SK-N-SH (cell line): ENCODE measurements at regions of chr22 and their contacts with region 1.

Region 1: GRCh38 chr22:35638410-35638809 is 9.8 kb upstream of the APOL6 start:
- DNase-seq: peak; percentile 89
- H3K4me3 ChIP-seq: no peak overlapping the region
- H3K27ac ChIP-seq: peak overlapping the region; percentile 70 to 95
- H3K4me1 ChIP-seq: peaks cover 7 to 29% of the 10 kb centered on the region in 2 experiments; a peak in 2 of 4 replicates
- H3K27me3 ChIP-seq: no peaks in the 10 kb centered on the region
- CTCF ChIP-seq: no peak
- EP300 ChIP-seq: peak in 1 of 2 experiments; percentile 85; a peak in 2 of 4 replicates
- RAD21 ChIP-seq: 0 out of 2 replicates have a peak, but pooled peaks have one; percentile 21

Region 2: DNA sequence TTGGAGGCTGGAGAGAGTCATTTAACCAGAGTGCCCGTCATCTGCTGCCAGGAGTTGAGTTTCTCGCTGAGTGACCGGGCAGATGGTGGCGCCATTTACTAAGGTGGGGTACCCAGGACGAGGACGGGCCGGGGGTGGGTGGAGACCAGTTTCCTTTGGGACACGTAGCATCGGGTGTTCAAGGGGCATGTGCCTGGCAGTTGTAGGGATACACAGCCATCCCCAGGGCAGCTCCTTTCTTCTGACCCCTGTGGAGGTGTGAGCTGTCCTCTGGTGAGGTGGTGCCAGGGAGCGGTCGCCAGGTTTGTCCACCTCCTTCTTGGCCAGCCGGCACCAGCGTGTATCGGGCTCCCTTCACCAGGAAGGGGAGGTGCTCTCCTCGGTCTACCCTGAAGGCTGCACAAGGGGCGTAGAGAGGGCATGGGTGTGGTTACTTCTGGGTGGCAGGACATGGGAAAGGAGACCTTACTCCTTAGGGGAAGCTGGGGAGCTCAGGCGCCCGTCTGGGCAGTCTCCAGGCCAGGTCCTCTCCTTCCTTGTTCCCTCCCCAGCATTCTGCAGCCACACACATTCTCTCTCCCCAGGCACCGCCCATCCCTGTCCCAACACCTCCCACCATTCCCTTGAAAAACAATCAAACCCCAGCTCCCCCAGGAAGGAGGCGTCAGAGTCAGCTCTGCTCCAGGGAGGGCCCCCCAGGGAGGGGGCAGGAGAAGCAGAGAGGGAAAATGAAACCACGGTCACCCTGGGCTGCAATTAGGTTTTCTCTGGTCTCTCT is 11.0 kb before region 1 on chr22:
- CTCF ChIA-PET with region 1: interaction called, 12 read pairs
- POLR2A ChIA-PET with region 1: no interaction called
- DNase-seq: peak; percentile 68
- H3K4me3 ChIP-seq: no peak overlapping the region
- H3K27ac ChIP-seq: peak overlapping the region in 1 of 2 experiments; percentile 53; a peak in 2 of 4 replicates
- H3K4me1 ChIP-seq: peaks cover 15 to 19% of the 10 kb centered on the region in 2 experiments; a peak in 1 of 4 replicates
- H3K27me3 ChIP-seq: no peaks in the 10 kb centered on the region
- CTCF ChIP-seq: peak; percentile 52
- EP300 ChIP-seq: no peak
- RAD21 ChIP-seq: peak; percentile 78